Adrenal gland (tissue), 19 donors: ENCODE measurements at regions of chr10 and their contacts with region 1.

Region 1: DNA sequence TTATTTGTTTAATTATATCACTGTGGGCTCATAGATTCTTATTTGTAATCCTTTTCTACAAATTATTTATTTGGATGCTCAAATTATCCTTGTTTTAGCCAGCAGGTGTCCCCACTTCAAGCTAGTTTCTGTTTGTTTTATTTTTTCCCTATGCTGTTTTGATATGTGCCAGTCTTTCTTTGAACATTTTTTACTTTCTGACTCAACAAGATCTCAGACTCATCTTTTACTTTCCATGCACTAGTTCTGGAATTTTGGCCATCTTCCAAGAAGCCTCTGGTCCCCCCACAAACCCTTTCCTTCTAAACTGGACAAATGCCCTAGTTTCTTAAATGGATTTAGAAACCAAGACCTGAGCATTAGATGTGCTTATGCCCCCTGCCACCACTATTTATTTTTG is 11.5 kb upstream of the MRPS16 start:
- DNase-seq: no peak
- H3K4me3 ChIP-seq: no peak overlapping the region
- H3K27ac ChIP-seq: no peak overlapping the region
- H3K4me1 ChIP-seq: peaks cover 0 to 8% of the 10 kb centered on the region in 2 donors
- H3K27me3 ChIP-seq: no peaks in the 10 kb centered on the region
- CTCF ChIP-seq: peak; percentile 43 to 63 (median 56)
- POLR2A ChIP-seq: no peak

Region 2: DNA sequence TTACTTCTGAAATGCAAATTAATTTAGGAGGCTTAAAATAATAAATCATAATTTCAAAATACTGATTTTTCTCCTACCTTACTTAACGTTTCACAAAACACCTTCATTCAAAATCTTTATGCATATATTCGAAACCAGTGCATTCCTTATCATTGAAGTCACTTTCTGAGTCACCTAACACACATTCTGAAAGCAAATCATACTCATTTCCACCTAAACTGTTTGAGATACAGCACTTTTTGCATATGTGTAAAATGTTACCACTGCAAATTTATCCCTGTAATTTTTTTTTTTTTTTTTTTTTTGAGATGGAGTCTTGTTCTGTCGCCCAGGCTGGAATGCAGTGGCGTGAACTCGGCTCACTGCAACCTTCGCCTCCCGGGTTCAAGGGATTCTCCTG is 216.2 kb after region 1 on chr10:
- intact Hi-C with region 1: loop called in 1 of 2 experiments (anchors 10 kb)
- DNase-seq: no peak
- H3K4me3 ChIP-seq: no peak overlapping the region
- H3K27ac ChIP-seq: no peak overlapping the region
- H3K4me1 ChIP-seq: peaks cover 0 to 5% of the 10 kb centered on the region in 2 donors
- H3K27me3 ChIP-seq: no peaks in the 10 kb centered on the region
- CTCF ChIP-seq: no peak
- POLR2A ChIP-seq: no peak

Region 3: DNA sequence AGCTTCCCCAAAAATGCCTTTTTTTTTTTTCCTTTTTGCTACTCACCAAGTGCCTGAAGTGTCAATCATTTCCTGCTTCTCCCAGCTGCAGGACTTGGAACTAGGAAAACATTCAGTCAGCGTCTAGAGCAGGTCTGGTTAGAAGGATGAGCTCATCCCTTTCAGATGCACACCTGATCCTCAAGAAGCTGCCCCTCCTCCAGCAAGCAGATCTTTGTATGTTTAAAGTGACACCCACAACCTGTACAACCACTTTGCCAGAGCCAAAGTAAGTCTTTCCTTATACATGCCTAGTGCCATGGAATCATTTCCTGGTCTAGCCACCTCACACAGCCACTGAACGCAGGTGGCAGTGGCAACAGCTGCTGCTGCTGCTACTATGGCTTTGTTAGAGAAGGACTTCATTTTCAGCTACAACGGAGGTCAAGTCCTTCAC is 337.6 kb after region 1 on chr10:
- intact Hi-C with region 1: no loop called
- DNase-seq: no peak
- H3K4me3 ChIP-seq: no peak overlapping the region
- H3K27ac ChIP-seq: no peak overlapping the region
- H3K4me1 ChIP-seq: no peaks in the 10 kb centered on the region
- H3K27me3 ChIP-seq: no peaks in the 10 kb centered on the region
- CTCF ChIP-seq: no peak
- POLR2A ChIP-seq: no peak